ENCODE measurements at regions of chr4 and their contacts with region 1.

Region 1: DNA sequence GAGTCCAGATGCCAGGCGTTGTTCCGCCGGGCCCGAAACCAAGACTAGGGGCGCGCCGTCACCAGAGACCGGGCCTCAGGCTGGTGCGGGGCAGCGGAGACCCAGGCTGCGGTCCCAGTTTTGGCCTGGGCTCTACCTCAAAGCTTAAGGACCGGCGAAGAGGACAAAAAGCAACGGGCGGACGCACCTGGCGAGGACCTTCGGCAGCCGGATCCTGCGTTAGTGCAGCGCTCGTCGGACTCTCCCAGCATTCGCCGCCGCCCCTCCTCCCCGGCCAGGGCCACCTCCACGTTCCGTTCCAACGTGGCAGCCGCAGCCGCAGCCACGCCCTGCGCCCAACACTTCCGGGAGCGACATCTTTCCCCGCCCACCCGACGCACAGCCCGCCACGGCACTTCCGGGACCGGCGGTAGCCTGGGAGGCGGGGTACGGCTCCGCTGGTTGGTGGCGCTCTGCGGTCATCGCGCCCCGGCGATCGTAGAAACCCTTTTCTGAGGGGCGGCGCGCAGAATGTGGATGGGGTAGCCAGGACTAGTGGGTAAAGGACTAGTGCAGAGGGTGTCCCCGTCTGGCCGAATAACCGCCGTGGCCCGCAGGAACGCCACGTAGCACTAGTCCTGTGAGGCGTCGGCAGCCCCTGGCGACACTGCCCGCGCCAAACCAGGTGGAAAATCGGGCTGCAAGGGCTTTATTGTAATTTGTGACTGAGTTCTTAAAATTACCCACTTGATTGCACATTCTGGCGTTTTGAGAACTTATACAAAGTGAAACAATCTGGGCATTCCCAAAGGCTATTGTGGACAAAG is at the start of gene SEC31A:
- DNase-seq: peak; percentile 98
- H3K4me3 Mint-ChIP-seq: peak within 1 kb of the TSS; percentile 81
- H3K27ac Mint-ChIP-seq: peak within 1 kb of the TSS; percentile 89
- H3K4me1 Mint-ChIP-seq: peaks cover 49% of the 10 kb centered on the region
- H3K27me3 Mint-ChIP-seq: no peaks in the 10 kb centered on the region
- total RNA-seq, gene SEC31A: 85.1 to 85.7 TPM

Region 2: DNA sequence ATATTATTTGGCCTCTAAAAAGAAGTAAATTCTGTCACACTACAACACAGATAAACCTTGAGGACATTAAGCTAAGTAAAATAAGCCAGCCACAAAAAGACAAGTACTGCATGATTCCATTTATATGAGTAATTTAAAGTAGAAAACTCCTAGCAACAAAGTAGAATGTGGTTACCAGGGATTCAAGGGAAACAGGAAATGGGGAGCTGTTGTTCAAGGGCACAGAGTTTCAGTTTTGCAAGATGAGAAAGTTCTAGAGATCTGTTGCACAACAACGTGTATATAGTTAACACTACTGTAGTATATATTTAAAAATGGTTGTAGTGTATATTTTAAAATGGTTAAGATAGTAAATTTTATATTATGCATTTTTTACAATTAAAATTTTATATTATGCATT is 25.5 kb before region 1 on chr4:
- CTCF ChIA-PET with region 1: interaction called, 5 read pairs
- intact Hi-C with region 1: loop called (anchors 2 kb)
- DNase-seq: peak; percentile 27
- H3K4me3 Mint-ChIP-seq: no peak overlapping the region
- H3K27ac Mint-ChIP-seq: no peak overlapping the region
- H3K4me1 Mint-ChIP-seq: peaks cover 28% of the 10 kb centered on the region
- H3K27me3 Mint-ChIP-seq: no peaks in the 10 kb centered on the region

Measured in activated naive CD4-positive, alpha-beta T cell treated with anti-CD3 and anti-CD28 coated beads for 36 hours (primary cell).